ENCODE measurements at regions of chr7 and their contacts with region 1.

Region 1: DNA sequence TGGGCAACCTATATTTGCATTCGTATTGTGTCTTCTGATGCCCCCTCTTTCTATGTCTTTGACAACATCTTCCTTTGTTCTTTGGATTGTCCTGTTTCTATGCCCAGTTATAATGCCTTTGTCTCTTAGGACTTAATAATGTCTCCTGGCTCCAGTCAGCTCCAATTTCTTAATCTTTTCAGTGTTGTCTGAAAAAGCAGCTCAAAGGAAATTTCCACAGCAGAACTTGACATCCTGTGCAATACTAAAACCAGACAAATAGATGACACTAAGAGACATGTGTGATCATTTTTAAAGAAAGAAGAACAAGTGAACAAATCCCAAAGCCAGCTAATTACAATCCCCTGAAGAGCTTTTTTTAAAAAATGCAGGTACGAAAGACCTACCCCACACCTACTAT is 47.7 kb upstream of the RNF148 start:
- DNase-seq: no peak
- H3K4me3 ChIP-seq: no peak overlapping the region
- H3K27ac ChIP-seq: no peak overlapping the region
- H3K4me1 ChIP-seq: no peaks in the 10 kb centered on the region
- H3K27me3 ChIP-seq: no peaks in the 10 kb centered on the region
- CTCF ChIP-seq: no peak
- POLR2A ChIP-seq: no peak

Region 2: DNA sequence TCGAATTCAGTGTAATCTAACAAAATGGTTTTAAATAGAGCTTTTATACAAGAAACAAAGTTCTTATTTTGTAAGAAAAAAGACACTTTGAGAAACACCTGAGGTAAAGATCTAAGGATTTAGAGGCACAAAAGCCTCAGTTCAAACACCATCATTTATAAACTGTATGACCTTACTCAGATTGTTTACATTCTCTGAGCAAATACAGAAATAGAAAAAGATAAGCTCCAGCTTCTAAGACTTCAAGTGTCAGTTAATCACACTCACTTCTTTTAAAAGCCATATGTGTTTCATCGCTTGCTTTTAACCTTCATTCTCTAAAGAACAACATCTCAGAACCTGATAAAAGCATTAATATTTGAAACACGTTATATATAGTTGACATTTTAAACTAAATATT is 107.9 kb after region 1 on chr7:
- intact Hi-C with region 1: loop called (anchors 10 kb)
- DNase-seq: no peak
- H3K4me3 ChIP-seq: no peak overlapping the region
- H3K27ac ChIP-seq: no peak overlapping the region
- H3K4me1 ChIP-seq: no peaks in the 10 kb centered on the region
- H3K27me3 ChIP-seq: no peaks in the 10 kb centered on the region
- CTCF ChIP-seq: no peak
- POLR2A ChIP-seq: no peak